Tibial artery (tissue), 4 donors: ENCODE measurements at regions of chrX and their contacts with region 1.

Region 1: GRCh38 chrX:14386981-14387380 is 142.4 kb upstream of the GLRA2 start:
- DNase-seq: no peak
- H3K4me3 ChIP-seq: no peak overlapping the region
- H3K27ac ChIP-seq: no peak overlapping the region
- H3K4me1 ChIP-seq: no peaks in the 10 kb centered on the region
- H3K27me3 ChIP-seq: no peaks in the 10 kb centered on the region
- CTCF ChIP-seq: no peak

Region 2: GRCh38 chrX:14309431-14309830 is 77.5 kb before region 1 on chrX:
- intact Hi-C with region 1: loop called (anchors 2 kb)
- DNase-seq: no peak
- H3K4me3 ChIP-seq: no peak overlapping the region
- H3K27ac ChIP-seq: no peak overlapping the region
- H3K4me1 ChIP-seq: no peaks in the 10 kb centered on the region
- H3K27me3 ChIP-seq: no peaks in the 10 kb centered on the region
- CTCF ChIP-seq: no peak

Region 3: GRCh38 chrX:14564058-14564457 is 177.1 kb after region 1 on chrX:
- intact Hi-C with region 1: no loop called
- DNase-seq: no peak
- H3K4me3 ChIP-seq: no peak overlapping the region
- H3K27ac ChIP-seq: no peak overlapping the region
- H3K4me1 ChIP-seq: no peaks in the 10 kb centered on the region
- H3K27me3 ChIP-seq: no peaks in the 10 kb centered on the region
- CTCF ChIP-seq: no peak